HEK293T (cell line): ENCODE measurements at regions of chr12 and their contacts with region 1.

Region 1: GRCh38 chr12:53379389-53380103 is 430 bp upstream of the SP1 start:
- DNase-seq: peak; percentile 89

Region 2: DNA sequence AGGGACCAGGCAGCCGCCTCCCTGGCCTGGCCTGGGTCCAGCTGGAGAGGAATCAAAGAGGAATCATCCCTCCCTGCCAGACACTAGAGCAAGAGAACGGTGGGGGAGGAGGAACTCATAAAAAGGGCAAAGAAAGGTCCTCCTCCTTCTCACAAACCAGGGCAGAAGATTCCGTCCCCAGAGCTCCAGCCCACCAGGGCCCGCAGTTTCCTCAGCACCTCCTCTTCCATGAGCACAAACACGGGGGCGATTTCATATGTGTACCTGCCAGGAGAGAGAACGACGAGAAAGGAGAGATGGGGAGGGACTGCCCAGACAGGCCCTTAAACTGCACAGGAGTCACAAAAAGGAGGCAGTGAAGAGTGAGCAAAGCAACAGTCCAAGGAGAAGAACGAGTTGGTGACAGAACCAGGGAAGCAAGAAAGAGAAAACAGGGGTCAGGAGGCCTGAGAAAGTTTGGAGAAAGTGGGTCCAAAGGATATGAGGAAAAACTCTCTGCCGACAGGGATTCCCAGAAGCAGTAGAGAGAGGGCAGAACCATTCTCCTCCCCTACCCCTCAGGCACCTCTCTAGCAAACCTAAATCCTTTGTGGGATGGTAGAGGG is 207.7 kb before region 1 on chr12:
- CTCF ChIA-PET with region 1: no interaction called
- POLR2A ChIA-PET with region 1: no interaction called
- DNase-seq: no peak

Region 3: DNA sequence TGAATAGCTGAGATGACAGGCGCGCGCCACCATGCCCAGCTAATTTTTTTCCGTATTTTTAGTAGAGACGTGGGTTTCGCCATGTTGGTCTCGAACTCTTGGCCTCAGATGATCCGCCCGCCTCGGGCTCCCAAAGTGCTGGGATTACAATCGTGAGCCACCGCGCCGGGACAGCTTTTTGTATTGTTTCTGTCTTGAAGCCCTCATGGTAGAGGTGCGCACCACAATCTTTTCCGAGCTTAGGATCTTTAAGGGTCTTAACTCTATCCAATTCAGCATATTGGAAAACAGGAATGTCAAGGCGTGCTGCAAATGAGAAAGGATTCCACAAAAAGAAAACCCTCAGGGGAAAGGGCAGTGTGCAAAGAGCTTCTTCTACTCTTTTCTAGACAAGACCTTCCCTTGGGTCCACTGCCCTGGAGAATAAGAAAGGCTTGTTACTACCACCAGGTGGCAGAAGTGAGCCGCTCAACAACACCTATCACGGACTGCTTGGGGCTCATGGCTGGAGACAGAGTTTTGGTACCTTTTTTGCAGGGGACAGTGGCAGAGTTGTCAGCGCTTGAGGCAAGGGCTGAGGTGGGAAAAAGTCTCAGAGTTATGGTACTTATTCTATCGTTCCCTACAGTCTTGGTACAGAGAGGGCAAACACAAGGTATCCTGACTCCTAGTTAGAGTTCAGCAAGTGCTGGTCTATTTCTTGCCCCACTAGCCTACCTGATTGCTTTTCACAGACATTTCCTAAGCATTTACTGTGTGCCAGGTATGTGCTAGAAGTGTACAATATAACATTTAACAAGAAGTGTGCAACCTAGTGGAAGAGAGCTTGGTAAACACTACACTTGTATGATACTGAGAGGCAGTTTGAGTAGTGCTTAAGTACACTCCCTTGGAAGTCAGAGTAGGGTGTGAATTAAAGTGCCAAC is 27.0 kb before region 1 on chr12:
- CTCF ChIA-PET with region 1: interaction called, 17 read pairs
- POLR2A ChIA-PET with region 1: interaction called, 27 read pairs
- DNase-seq: peak; percentile 81

Region 4: GRCh38 chr12:53391729-53392128 is 12.2 kb after region 1 on chr12:
- CTCF ChIA-PET with region 1: no interaction called
- POLR2A ChIA-PET with region 1: interaction called, 19 read pairs
- DNase-seq: no peak

Region 5: GRCh38 chr12:53427905-53428594 is 48.5 kb after region 1 on chr12:
- CTCF ChIA-PET with region 1: no interaction called
- POLR2A ChIA-PET with region 1: interaction called, 12 read pairs
- DNase-seq: no peak